PC-3 (cell line): ENCODE measurements at regions of chrX and their contacts with region 1.

Region 1: DNA sequence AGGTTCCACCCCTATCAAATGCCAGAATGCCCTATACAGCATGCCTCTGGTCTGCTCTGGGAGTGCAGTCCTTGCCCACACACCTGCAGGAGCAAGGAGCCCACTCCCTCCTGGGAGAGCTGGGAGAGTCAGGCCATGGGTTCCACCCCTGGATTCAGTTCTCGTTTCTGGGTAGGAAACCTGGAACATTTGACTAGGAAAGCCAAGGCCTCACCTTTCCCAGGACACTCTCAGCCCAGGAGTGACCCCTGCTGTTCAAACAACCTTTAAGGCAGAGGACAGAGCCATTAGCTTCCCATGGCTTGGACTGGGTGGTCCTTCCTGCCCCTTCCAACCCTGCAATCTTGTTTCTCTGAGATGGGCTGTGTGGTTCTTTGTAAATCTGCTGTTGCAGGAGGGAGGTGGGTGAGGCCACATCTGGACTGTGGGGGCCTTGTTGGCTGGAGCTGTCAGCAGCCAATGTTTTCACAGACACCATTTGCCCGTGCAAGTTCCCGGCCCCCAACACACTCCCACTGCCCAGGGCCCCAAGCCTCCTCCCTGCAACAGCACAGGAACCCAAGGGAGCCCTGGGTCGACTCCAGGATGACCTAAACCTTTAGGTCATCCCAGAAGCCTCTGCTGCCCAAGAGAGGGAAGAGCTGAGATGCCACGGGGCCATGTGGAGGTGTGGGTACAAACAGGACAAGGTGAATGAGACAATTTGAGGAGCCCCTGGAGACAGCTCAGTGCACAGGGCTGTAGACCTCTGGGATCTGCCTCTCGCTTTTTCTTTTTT is 104.4 kb downstream of the PJA1 start:
- DNase-seq: peak; percentile 61
- ATAC-seq: peak; percentile 86
- H3K4me3 ChIP-seq: no peak overlapping the region
- H3K27ac ChIP-seq: no peak overlapping the region
- H3K4me1 ChIP-seq: peaks cover 4% of the 10 kb centered on the region; the same call in 1 of the 2 replicates
- H3K27me3 ChIP-seq: no peaks in the 10 kb centered on the region
- CTCF ChIP-seq: peak; percentile 58

Region 2: DNA sequence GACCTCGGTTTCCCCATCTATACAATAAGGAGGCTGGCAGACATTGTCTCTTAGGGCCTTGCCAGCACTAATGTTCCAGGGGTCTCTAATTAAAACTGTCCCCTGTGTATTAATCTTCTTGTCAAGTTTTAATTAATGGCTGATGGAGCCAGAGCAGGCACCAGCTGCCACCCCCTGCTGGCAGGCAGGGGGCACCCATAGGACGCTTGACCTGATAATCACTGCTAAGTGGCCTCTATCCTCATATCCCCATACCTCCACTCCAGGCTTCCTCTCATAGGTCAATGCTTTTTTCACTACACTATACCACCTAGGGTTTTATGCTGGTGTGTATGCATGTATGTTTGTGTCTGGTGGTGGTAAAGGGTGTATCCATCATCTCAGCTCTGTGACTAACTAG is 142.6 kb before region 1 on chrX:
- CTCF ChIA-PET with region 1: no interaction called
- POLR2A ChIA-PET with region 1: no interaction called
- intact Hi-C with region 1: loop called (anchors 1 kb)
- DNase-seq: peak; percentile 13
- ATAC-seq: peak; percentile 54; the same call in 1 of the 2 replicates
- H3K4me3 ChIP-seq: no peak overlapping the region
- H3K27ac ChIP-seq: no peak overlapping the region
- H3K4me1 ChIP-seq: no peaks in the 10 kb centered on the region
- H3K27me3 ChIP-seq: no peaks in the 10 kb centered on the region
- CTCF ChIP-seq: peak; percentile 47